ENCODE measurements at regions of chr11 and their contacts with region 1.

Region 1: DNA sequence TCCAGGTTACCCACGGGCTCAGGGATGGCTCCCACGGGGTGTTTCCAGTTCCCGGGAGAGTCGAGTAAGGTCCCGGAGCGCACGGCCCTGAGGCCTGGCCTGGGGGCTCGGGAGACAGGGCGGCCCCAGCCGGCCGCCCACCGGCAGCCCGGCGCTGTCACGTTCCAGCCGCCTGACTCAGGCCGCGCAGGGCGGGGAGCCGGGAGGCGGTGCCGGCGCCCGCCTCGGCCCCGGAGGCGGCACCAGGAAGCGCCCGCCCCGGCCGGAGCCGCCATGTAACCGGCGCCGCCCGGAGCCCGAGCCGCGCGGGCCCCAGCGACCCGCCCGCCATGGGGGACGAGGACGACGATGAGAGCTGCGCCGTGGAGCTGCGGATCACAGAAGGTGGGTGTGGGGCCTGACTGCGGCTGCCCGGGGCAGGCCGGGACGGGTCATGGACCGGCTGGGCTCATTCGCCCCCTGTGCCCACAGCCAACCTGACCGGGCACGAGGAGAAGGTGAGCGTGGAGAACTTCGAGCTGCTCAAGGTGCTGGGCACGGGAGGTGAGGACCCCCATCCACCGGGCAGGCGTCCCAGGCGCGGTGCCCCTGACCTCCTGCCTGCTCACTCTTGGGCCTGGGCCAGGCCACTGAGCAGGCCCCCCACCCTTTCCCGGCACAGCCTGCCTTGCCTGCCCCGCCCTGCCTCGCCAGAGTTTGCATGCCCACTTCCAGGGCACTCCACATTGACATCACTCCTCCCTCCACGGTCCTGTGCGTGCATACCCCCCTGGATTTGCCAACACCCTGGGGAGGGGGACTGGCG is at the start of gene RPS6KA4:
- DNase-seq: peak; percentile 49
- ATAC-seq: peak; percentile 49
- H3K4me3 Mint-ChIP-seq: peak within 1 kb of the TSS; percentile 80
- H3K27ac Mint-ChIP-seq: peak within 1 kb of the TSS; percentile 50
- H3K4me1 Mint-ChIP-seq: peaks cover 26% of the 10 kb centered on the region
- H3K27me3 Mint-ChIP-seq: no peaks in the 10 kb centered on the region
- CTCF ChIP-seq: no peak
- total RNA-seq, gene RPS6KA4: 16.8 to 18.3 TPM (median 18.3 TPM) in 3 replicates

Region 2: DNA sequence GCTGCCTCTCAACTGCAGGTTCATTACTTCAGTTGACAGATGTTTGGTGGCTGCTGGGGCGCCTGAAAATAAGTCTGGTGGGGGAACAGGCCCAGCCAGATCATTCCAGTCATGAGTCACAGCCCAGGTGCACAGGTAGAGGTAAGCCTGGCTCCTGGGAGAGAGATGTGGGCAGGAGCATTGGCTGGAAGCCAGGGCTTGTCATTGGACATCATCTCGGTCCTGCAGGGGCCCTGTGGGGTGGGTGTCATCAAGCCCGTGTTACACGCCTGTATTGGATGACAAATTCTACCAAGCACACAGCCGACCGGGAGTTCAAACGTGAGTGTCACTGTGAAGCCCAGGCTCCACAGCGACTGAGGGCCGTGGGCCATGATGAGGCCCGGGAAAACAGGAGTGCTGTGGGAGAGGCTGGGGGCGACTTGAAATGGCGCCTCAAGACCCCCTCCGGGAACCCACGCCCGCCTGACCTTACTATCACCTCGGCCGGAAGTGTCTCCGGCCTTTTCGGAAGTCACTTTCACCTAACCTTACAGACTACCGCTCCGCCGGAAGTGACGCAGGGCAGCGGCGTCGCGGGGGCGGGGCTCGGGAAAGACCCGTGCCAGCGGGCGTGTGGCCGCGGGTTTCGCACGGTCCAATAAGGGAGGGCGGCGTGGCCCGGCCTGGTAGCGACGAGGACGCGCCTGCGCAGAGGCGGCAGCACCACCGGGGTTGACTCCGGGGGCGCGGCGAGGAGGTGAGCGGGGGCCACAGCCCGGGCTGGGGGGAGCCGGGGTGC is 118.5 kb before region 1 on chr11 and contains the start of gene FKBP2:
- CTCF ChIA-PET with region 1: interaction called, 10 read pairs
- POLR2A ChIA-PET with region 1: no interaction called
- DNase-seq: peak; percentile 97
- ATAC-seq: peak; percentile 57
- H3K4me3 Mint-ChIP-seq: peak within 1 kb of the TSS; percentile 88
- H3K27ac Mint-ChIP-seq: peak within 1 kb of the TSS; percentile 100
- H3K4me1 Mint-ChIP-seq: peaks cover 30% of the 10 kb centered on the region
- H3K27me3 Mint-ChIP-seq: no peaks in the 10 kb centered on the region
- CTCF ChIP-seq: no peak
- total RNA-seq, gene FKBP2: 57.2 to 65.9 TPM (median 61.7 TPM) in 3 replicates

Region 3: GRCh38 chr11:64304316-64305072 is 54.6 kb before region 1 on chr11:
- CTCF ChIA-PET with region 1: interaction called, 68 read pairs
- POLR2A ChIA-PET with region 1: interaction called, 6 read pairs
- DNase-seq: peak; percentile 97
- ATAC-seq: peak; percentile 31
- H3K4me3 Mint-ChIP-seq: peak overlapping the region; percentile 91
- H3K27ac Mint-ChIP-seq: peak overlapping the region; percentile 100
- H3K4me1 Mint-ChIP-seq: peaks cover 16% of the 10 kb centered on the region
- H3K27me3 Mint-ChIP-seq: peaks cover 26% of the 10 kb centered on the region
- CTCF ChIP-seq: peak; percentile 84

Region 4: DNA sequence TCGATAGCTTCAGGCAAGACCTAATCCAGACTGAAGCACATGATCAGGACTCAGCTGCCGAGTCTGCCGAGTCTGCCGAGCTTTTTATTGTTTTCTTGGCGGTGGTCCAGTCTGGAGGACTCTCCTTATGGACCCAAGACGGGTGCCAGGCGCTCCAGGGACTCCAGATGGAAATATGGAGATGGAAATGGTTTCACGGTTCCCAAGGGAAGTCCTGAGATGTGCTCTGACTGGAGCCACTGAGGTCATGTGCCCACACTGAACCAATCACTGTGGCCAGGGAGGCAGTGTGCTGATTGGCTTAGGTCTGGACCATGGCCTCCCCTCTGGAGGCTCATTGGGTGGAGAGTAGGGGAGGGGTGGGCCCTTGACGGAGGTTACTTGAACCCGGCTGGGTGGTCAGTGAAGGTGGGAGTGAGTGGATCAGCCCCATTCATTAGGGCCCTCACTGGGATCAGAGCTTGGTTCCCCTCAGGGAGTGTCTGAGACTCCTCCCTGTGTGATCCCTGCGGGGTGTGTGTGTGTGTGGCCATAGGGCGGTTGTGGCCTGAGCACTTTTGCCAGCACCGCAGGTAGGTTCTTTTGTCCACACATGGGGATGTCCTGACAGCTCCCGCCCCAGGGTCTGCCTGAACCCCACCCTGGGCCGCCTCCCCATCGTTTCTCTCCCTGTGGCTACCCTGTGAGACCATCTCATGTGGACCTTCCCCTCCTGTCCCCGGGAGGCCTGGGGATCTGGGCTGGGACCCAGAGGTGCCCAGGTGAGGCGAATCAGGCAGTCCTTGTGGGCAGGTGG is 13.9 kb after region 1 on chr11:
- CTCF ChIA-PET with region 1: interaction called, 140 read pairs
- POLR2A ChIA-PET with region 1: interaction called, 4 read pairs
- DNase-seq: no peak
- ATAC-seq: peak; percentile 72
- H3K4me3 Mint-ChIP-seq: peak overlapping the region; percentile 10; the same call in 1 of the 2 replicates
- H3K27ac Mint-ChIP-seq: no peak overlapping the region
- H3K4me1 Mint-ChIP-seq: peaks cover 11% of the 10 kb centered on the region
- H3K27me3 Mint-ChIP-seq: no peaks in the 10 kb centered on the region
- CTCF ChIP-seq: no peak

Region 5: DNA sequence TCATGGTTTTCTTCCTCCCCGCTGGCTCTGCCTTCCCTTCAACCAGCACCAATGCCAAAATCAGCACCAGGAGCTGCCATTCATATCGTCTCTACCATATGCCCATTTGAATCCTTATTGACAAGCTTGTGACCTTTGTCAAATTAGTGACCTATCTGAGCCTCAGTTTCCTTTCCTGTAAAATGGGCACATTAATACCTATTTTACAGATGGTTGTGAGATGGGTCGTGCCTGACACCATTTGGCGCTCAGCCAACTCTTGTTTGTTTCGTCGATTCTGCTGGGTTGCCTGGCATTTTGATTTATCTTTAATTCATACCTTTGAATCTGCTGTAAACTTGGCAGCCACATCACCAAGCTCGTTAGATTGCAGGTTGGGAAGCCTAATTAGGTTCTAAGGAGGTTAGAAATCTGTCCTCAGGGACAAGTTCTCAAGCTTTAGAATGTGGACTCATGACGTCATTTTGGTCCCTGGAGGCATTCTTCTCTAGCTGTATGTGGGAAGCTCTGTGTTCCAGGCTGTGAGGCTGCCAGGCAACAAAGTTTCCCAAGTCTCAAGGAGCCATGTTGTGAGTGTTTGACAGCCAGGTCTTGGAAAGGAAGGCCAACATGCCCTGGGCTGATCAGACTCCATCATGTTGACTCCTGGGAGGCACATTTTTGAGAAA is 60.8 kb after region 1 on chr11:
- CTCF ChIA-PET with region 1: interaction called, 21 read pairs
- POLR2A ChIA-PET with region 1: no interaction called
- DNase-seq: no peak
- ATAC-seq: no peak
- H3K4me3 Mint-ChIP-seq: no peak overlapping the region
- H3K27ac Mint-ChIP-seq: no peak overlapping the region
- H3K4me1 Mint-ChIP-seq: peaks cover 6% of the 10 kb centered on the region
- H3K27me3 Mint-ChIP-seq: peaks cover 52% of the 10 kb centered on the region
- CTCF ChIP-seq: no peak

Region 6: GRCh38 chr11:64566042-64566914 is 207.2 kb after region 1 on chr11:
- CTCF ChIA-PET with region 1: interaction called, 28 read pairs
- POLR2A ChIA-PET with region 1: no interaction called
- DNase-seq: peak; percentile 59
- ATAC-seq: peak; percentile 45
- H3K4me3 Mint-ChIP-seq: peak overlapping the region; percentile 64
- H3K27ac Mint-ChIP-seq: peak overlapping the region; percentile 99
- H3K4me1 Mint-ChIP-seq: peaks cover 28% of the 10 kb centered on the region
- H3K27me3 Mint-ChIP-seq: no peaks in the 10 kb centered on the region
- CTCF ChIP-seq: no peak

Region 7: GRCh38 chr11:64652586-64653387 is 293.7 kb after region 1 on chr11:
- CTCF ChIA-PET with region 1: interaction called, 55 read pairs
- POLR2A ChIA-PET with region 1: no interaction called
- DNase-seq: peak; percentile 97
- ATAC-seq: peak; percentile 79
- H3K4me3 Mint-ChIP-seq: peak overlapping the region; percentile 20; the same call in 1 of the 2 replicates
- H3K27ac Mint-ChIP-seq: no peak overlapping the region
- H3K4me1 Mint-ChIP-seq: peaks cover 12% of the 10 kb centered on the region
- H3K27me3 Mint-ChIP-seq: peaks cover 14% of the 10 kb centered on the region
- CTCF ChIP-seq: peak; percentile 80

Region 8: DNA sequence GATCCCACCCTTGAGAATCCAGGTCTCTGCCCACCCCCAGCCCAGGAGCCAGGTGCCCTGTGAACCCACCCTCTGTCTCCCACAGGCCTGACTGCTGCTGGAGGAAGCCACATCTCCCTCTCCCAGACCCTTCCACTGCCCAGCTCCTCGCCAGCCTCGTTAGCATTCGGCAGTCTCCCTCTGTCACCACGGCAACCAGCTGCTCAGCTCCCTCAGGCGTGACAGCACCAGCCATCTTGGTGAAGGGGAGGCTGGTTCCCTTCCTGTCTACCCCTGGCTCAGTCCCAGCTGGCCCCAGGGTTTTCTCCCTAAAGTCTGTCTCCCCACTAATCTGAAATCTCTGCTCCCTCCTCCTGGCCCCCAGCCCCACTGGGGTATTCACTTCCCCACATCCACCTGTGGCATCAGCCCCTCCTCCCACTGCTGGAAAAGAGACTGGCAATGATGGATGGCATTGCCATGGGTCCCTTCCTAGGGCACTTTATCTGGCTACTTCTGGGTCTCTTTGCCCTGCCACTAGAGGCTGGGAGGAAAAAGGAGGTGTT is 335.8 kb after region 1 on chr11:
- CTCF ChIA-PET with region 1: no interaction called
- POLR2A ChIA-PET with region 1: no interaction called
- DNase-seq: no peak
- ATAC-seq: peak; percentile 65
- H3K4me3 Mint-ChIP-seq: no peak overlapping the region
- H3K27ac Mint-ChIP-seq: no peak overlapping the region
- H3K4me1 Mint-ChIP-seq: peaks cover 21% of the 10 kb centered on the region
- H3K27me3 Mint-ChIP-seq: peaks cover 49% of the 10 kb centered on the region
- CTCF ChIP-seq: no peak

Measured in WTC11 (cell line).